ENCODE measurements at regions of chr5 and their contacts with region 1.

Region 1: GRCh38 chr5:54517174-54518092 is at the start of gene SNX18:
- DNase-seq: peak; percentile 93 to 95
- H3K4me3 ChIP-seq: peak within 1 kb of the TSS; percentile 95
- H3K4me3 Mint-ChIP-seq: peak within 1 kb of the TSS; percentile 68
- H3K27ac Mint-ChIP-seq: no peak within 1 kb of the TSS
- H3K4me1 ChIP-seq: peaks cover 25% of the 10 kb centered on the region
- H3K4me1 Mint-ChIP-seq: no peaks in the 10 kb centered on the region
- H3K27me3 ChIP-seq: no peaks in the 10 kb centered on the region
- H3K27me3 Mint-ChIP-seq: no peaks in the 10 kb centered on the region
- CTCF ChIP-seq: peak; percentile 93 to 97
- total RNA-seq, gene SNX18: 25.0 and 28.0 TPM in 2 replicates

Region 2: DNA sequence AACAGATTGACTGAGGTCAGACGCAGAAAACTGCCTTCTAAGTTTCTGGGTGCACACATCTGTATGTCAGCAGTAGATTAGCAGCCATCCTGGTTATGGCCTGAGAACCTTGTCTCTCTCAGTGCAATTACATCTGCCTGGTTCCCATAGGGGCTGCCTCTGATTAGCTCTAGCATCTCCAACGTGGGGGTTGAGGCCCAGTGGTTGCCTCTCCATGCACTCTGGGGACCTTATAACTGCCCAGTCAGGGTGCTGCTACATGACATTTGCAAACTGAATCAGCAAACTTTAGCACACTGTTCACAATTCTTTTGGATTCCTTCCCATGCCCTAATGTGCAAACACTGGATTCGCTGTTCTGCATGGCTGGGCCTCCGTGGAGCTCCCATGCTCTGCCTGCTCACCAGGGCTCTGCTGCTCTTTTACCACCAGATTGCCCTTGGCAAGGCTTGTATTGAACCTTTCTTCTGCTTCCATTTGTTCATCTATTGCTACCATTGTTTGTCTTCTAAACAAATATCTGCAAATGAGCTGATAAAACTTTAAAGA is 36.3 kb after region 1 on chr5:
- CTCF ChIA-PET with region 1: no interaction called
- POLR2A ChIA-PET with region 1: no interaction called
- intact Hi-C with region 1: no loop called
- DNase-seq: no peak
- H3K4me3 ChIP-seq: no peak overlapping the region
- H3K4me3 Mint-ChIP-seq: no peak overlapping the region
- H3K27ac Mint-ChIP-seq: no peak overlapping the region
- H3K4me1 ChIP-seq: 0 out of 2 replicates have a peak, but pooled peaks cover 4% of the 10 kb centered on the region
- H3K4me1 Mint-ChIP-seq: no peaks in the 10 kb centered on the region
- H3K27me3 ChIP-seq: no peaks in the 10 kb centered on the region
- H3K27me3 Mint-ChIP-seq: no peaks in the 10 kb centered on the region
- CTCF ChIP-seq: no peak

Region 3: GRCh38 chr5:54619731-54620547 is 102.5 kb after region 1 on chr5:
- CTCF ChIA-PET with region 1: interaction called, 3 read pairs
- POLR2A ChIA-PET with region 1: no interaction called
- intact Hi-C with region 1: loop called (anchors 10 kb)
- DNase-seq: no peak
- H3K4me3 ChIP-seq: no peak overlapping the region
- H3K4me3 Mint-ChIP-seq: no peak overlapping the region
- H3K27ac Mint-ChIP-seq: no peak overlapping the region
- H3K4me1 ChIP-seq: no peaks in the 10 kb centered on the region
- H3K4me1 Mint-ChIP-seq: no peaks in the 10 kb centered on the region
- H3K27me3 ChIP-seq: no peaks in the 10 kb centered on the region
- H3K27me3 Mint-ChIP-seq: no peaks in the 10 kb centered on the region
- CTCF ChIP-seq: no peak

Region 4: GRCh38 chr5:54769071-54769470 is 251.6 kb after region 1 on chr5:
- CTCF ChIA-PET with region 1: interaction called, 4 read pairs
- POLR2A ChIA-PET with region 1: no interaction called
- intact Hi-C with region 1: loop called (anchors 1 kb)
- DNase-seq: peak in 1 of 2 experiments; percentile 19
- H3K4me3 ChIP-seq: no peak overlapping the region
- H3K4me3 Mint-ChIP-seq: no peak overlapping the region
- H3K27ac Mint-ChIP-seq: no peak overlapping the region
- H3K4me1 ChIP-seq: no peaks in the 10 kb centered on the region
- H3K4me1 Mint-ChIP-seq: no peaks in the 10 kb centered on the region
- H3K27me3 ChIP-seq: no peaks in the 10 kb centered on the region
- H3K27me3 Mint-ChIP-seq: peaks cover 6% of the 10 kb centered on the region
- CTCF ChIP-seq: peak in 1 of 2 experiments; percentile 42

Region 5: DNA sequence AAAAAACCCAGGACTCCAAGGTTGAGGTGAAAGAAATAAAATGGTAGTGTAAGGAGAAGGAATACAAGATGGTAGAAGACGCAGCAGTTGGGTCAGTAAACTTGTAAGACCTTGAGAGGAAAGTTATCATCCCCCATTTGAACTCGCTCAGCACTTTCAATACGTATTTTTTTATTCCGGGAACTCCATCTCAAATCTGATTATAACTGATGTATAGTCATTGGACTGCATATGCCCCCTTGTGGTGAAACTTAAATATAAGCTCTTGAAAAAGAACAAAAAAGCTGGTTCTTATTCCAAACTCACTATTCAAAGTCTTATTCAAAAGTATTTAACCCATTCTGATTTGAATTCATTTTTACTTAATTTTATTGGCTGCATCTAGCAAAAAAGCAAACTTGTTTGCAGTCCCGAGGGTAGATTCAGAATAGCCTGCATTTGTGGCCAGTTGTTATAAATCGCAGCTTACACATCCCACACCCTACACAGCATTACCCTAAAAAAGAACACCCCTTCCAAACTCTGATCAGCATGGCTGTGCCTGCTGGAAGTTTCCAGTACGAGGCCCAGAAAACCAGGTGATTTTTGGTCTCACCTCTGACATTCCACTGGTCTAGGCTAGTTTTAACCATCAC is 350.0 kb after region 1 on chr5:
- CTCF ChIA-PET with region 1: interaction called, 48 read pairs
- POLR2A ChIA-PET with region 1: no interaction called
- intact Hi-C with region 1: loop called (anchors 1 kb)
- DNase-seq: peak in 1 of 2 experiments; percentile 32
- H3K4me3 ChIP-seq: no peak overlapping the region
- H3K4me3 Mint-ChIP-seq: no peak overlapping the region
- H3K27ac Mint-ChIP-seq: no peak overlapping the region
- H3K4me1 ChIP-seq: no peaks in the 10 kb centered on the region
- H3K4me1 Mint-ChIP-seq: peaks cover under 1% of the 10 kb centered on the region
- H3K27me3 ChIP-seq: no peaks in the 10 kb centered on the region; the same call in 1 of the 2 replicates
- H3K27me3 Mint-ChIP-seq: peaks cover 15% of the 10 kb centered on the region
- CTCF ChIP-seq: peak; percentile 37 to 40

Region 6: GRCh38 chr5:55159763-55160492 is 642.5 kb after region 1 on chr5 and contains the start of gene GPX8:
- CTCF ChIA-PET with region 1: interaction called, 3 read pairs
- POLR2A ChIA-PET with region 1: no interaction called
- intact Hi-C with region 1: loop called (anchors 10 kb)
- DNase-seq: peak; percentile 53 to 60
- H3K4me3 ChIP-seq: peak within 1 kb of the TSS; percentile 32
- H3K4me3 Mint-ChIP-seq: peak within 1 kb of the TSS; percentile 78
- H3K27ac Mint-ChIP-seq: peak within 1 kb of the TSS; percentile 78
- H3K4me1 ChIP-seq: no peaks in the 10 kb centered on the region
- H3K4me1 Mint-ChIP-seq: no peaks in the 10 kb centered on the region
- H3K27me3 ChIP-seq: no peaks in the 10 kb centered on the region
- H3K27me3 Mint-ChIP-seq: peaks cover 18% of the 10 kb centered on the region
- CTCF ChIP-seq: peak; percentile 57 to 58
- total RNA-seq, gene GPX8: 18.8 and 18.9 TPM in 2 replicates